Transverse colon (tissue), 4 donors: ENCODE measurements at regions of chr19 and their contacts with region 1.

Region 1: GRCh38 chr19:38062959-38063761 is 156.2 kb downstream of the SIPA1L3 start:
- DNase-seq: no peak
- H3K4me3 ChIP-seq: no peak overlapping the region
- H3K27ac ChIP-seq: peak overlapping the region in 2 of 4 donors; percentile 17 to 44
- H3K4me1 ChIP-seq: peaks cover 0 to 22% (median 8%) of the 10 kb centered on the region in 4 donors
- H3K27me3 ChIP-seq: no peaks in the 10 kb centered on the region
- CTCF ChIP-seq: no peak
- EP300 ChIP-seq: no peak
- POLR2A ChIP-seq: no peak

Region 2: DNA sequence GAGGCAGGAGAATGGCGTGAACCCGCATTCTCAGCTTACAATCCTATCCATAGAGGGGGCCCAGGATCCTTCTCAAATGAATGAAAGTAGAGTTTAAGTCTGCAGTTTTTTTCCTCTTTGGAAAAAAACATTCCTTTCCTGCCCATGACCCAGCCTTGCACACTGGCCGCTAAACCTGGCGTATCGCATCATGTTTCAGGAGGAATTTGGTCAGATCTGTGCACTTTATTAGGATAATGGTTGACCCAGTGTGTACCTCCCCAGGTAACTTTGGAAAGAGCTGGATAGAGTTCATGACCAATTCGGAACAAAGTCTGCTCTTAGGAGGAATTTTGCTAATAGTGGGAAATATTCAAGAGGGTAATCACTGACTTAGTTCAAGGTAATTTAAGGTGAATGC is 110.0 kb before region 1 on chr19:
- in situ Hi-C with region 1: no loop called
- intact Hi-C with region 1: no loop called
- DNase-seq: no peak
- H3K4me3 ChIP-seq: no peak overlapping the region
- H3K27ac ChIP-seq: peak overlapping the region in 3 of 4 donors; percentile 27 to 77 (median 76)
- H3K4me1 ChIP-seq: peaks cover 5 to 47% (median 15%) of the 10 kb centered on the region in 4 donors
- H3K27me3 ChIP-seq: no peaks in the 10 kb centered on the region
- CTCF ChIP-seq: no peak
- EP300 ChIP-seq: no peak
- POLR2A ChIP-seq: no peak

Region 3: GRCh38 chr19:37963190-37963936 is 99.8 kb before region 1 on chr19:
- in situ Hi-C with region 1: no loop called
- intact Hi-C with region 1: loop called (anchors 5 kb)
- DNase-seq: no peak
- H3K4me3 ChIP-seq: no peak overlapping the region
- H3K27ac ChIP-seq: no peak overlapping the region
- H3K4me1 ChIP-seq: peaks cover 0 to 30% (median 6%) of the 10 kb centered on the region in 4 donors
- H3K27me3 ChIP-seq: no peaks in the 10 kb centered on the region
- CTCF ChIP-seq: no peak
- EP300 ChIP-seq: no peak
- POLR2A ChIP-seq: no peak

Region 4: DNA sequence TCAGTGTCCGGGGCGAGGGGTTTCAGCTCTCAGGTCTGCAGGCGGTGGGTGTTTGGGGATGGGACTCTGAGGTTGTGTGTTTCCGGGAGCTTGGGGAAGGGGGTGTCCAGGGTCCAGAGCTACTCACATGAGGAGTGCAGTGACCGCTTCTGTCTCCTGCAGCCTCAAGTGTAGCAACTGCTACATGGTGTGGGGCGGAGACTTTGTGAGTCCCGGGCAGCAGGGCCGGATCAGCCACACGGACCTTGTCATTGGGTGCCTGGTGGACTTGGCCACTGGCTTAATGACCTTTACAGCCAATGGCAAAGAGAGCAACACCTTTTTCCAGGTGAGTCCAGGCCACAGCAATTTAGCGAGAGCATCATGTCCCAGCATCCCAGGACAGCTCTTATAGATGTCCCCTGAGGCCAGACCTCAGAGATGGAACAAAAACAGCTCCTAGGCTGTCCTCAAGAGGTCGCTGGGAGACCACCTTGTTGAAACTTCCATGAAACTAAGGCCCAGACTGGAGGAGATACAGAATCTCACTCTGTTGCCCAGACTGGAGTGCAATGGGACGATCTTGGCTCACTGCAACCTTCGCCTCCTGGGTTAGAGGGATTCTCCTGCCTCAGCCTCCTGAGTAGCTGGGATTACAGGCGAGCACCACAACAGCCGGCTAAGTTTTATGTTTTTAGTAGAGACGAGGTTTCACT is 415.3 kb after region 1 on chr19:
- in situ Hi-C with region 1: no loop called
- intact Hi-C with region 1: no loop called
- DNase-seq: no peak
- H3K4me3 ChIP-seq: no peak overlapping the region
- H3K27ac ChIP-seq: no peak overlapping the region
- H3K4me1 ChIP-seq: no peaks in the 10 kb centered on the region
- H3K27me3 ChIP-seq: no peaks in the 10 kb centered on the region
- CTCF ChIP-seq: no peak
- EP300 ChIP-seq: no peak
- POLR2A ChIP-seq: no peak